ENCODE measurements at regions of chr20 and their contacts with region 1.

Region 1: DNA sequence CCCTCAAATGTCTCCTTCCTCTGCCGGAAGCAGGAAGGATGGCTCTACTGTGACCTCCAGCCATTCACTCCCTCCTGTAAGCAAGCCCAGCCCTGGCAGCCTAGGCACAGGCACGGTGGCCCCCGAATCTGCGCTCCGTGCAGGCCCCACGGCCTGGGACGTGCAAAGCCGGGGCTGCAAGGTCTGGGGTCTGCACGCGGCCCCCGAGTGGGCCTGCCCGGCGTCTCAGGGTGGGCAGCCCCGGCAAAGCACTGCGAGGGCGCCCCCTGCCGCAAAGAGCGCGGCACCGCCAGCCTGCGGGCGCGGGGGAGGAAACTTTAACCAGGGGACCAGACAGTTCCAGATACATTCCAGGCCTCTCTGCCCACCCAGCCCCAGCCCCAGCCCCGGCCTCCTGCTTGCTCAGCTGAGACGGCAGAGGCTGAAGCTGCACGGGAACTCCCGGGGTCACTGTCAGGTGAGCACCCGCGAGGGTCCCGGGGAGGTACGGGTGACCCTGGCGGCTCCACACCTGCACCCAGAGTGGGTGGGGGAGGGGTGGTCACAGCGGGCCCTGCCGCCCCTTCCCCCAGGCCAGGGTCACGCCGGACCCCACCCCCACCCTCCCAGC is 98.8 kb downstream of the ASXL1 start:
- DNase-seq: peak in 1 of 2 experiments; percentile 93
- H3K4me3 ChIP-seq: peak overlapping the region; percentile 35 to 61 (median 44); a peak in 7 of 8 replicates
- H3K27ac ChIP-seq: 0 out of 2 replicates have a peak overlapping the region, but pooled peaks have one; percentile 69
- H3K4me1 ChIP-seq: peaks cover 0 to 16% (median 12%) of the 10 kb centered on the region in 4 experiments; a peak in 6 of 7 replicates
- H3K27me3 ChIP-seq: no peaks in the 10 kb centered on the region
- CTCF ChIP-seq: peak; percentile 79 to 85 (median 82)
- EP300 ChIP-seq: no peak
- POLR2A ChIP-seq: 0 out of 3 replicates have a peak, but pooled peaks of 1 of the 2 experiments have one; percentile 15
- RAD21 ChIP-seq: peak; percentile 65 to 78

Region 2: DNA sequence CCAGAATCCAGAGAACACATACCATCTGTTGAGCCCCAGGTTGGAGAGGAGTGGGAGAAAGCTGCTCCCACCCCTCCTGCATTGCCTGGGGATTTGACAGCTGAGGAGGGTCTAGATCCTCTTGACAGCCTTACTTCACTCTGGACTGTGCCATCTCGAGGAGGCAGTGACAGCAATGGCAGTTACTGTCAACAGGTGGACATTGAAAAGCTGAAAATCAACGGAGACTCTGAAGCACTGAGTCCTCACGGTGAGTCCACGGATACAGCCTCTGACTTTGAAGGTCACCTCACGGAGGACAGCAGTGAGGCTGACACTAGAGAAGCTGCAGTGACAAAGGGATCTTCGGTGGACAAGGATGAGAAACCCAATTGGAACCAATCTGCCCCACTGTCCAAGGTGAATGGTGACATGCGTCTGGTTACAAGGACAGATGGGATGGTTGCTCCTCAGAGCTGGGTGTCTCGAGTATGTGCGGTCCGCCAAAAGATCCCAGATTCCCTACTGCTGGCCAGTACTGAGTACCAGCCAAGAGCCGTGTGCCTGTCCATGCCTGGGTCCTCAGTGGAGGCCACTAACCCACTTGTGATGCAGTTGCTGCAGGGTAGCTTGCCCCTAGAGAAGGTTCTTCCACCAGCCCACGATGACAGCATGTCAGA is 21.4 kb before region 1 on chr20:
- CTCF ChIA-PET with region 1: interaction called, 10 read pairs
- POLR2A ChIA-PET with region 1: interaction called, 3 read pairs
- DNase-seq: no peak
- H3K4me3 ChIP-seq: no peak overlapping the region
- H3K27ac ChIP-seq: no peak overlapping the region
- H3K4me1 ChIP-seq: no peaks in the 10 kb centered on the region
- H3K27me3 ChIP-seq: no peaks in the 10 kb centered on the region
- CTCF ChIP-seq: no peak
- EP300 ChIP-seq: no peak
- POLR2A ChIP-seq: no peak
- RAD21 ChIP-seq: no peak

Region 3: DNA sequence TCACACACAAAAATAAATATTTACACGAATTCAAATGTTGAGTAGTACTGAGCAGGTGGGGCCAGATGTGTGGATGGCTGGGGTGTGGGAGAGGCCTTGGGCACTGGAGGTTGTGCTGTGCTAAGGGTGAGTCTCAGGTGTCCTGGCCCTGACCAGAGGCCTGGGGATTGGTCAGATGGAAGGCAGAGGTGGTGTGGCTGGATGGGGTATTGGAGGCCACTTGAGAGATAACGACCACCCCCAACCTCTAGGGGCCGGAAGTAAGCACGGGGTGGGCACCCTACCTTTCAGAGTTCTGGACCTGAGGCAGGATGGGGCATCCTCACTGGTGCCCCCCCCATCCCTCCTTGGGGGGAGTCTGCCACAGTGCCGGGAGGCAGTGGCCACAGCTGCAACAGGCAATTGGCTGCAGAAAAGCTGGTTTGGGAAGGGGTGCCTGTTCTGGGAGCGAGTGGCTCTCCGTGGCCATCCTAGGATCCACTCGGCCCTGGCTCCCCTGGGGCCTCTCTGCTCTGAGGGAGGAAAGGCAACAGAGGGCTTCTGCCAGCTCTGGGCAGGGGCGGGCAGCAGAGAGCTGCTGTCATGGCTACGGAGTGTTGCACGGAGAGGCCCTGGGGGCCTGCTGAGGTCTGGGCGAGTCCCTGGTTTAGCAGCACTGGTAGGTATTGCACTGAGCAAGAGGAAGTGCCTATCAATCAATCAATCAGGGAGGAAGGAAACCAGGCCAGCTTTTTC is 11.3 kb before region 1 on chr20:
- CTCF ChIA-PET with region 1: interaction called, 13 read pairs
- POLR2A ChIA-PET with region 1: interaction called, 3 read pairs
- DNase-seq: no peak
- H3K4me3 ChIP-seq: no peak overlapping the region
- H3K27ac ChIP-seq: no peak overlapping the region
- H3K4me1 ChIP-seq: peaks cover 0 to 5% (median 3%) of the 10 kb centered on the region in 4 experiments; a peak in 3 of 7 replicates
- H3K27me3 ChIP-seq: no peaks in the 10 kb centered on the region
- CTCF ChIP-seq: no peak
- EP300 ChIP-seq: no peak
- POLR2A ChIP-seq: no peak
- RAD21 ChIP-seq: no peak

Region 4: GRCh38 chr20:32470025-32470861 is 13.3 kb after region 1 on chr20:
- CTCF ChIA-PET with region 1: interaction called, 19 read pairs
- POLR2A ChIA-PET with region 1: interaction called, 7 read pairs
- DNase-seq: peak in 1 of 2 experiments; percentile 84
- H3K4me3 ChIP-seq: no peak overlapping the region
- H3K27ac ChIP-seq: peak overlapping the region; percentile 41
- H3K4me1 ChIP-seq: peaks cover 4 to 30% (median 21%) of the 10 kb centered on the region in 4 experiments; a peak in 6 of 7 replicates
- H3K27me3 ChIP-seq: no peaks in the 10 kb centered on the region
- CTCF ChIP-seq: peak; percentile 26 to 75 (median 71)
- EP300 ChIP-seq: no peak
- POLR2A ChIP-seq: no peak
- RAD21 ChIP-seq: peak; percentile 46 to 53; a peak in 3 of 4 replicates